ENCODE measurements at regions of chr9 and their contacts with region 1.

Region 1: GRCh38 chr9:113309204-113309813 is 6.1 kb upstream of the RNF183 start:
- DNase-seq: peak; percentile 17 to 44
- H3K4me3 ChIP-seq: no peak overlapping the region
- H3K27ac ChIP-seq: no peak overlapping the region
- H3K4me1 ChIP-seq: no peaks in the 10 kb centered on the region; the same call in 1 of the 2 replicates
- H3K27me3 ChIP-seq: no peaks in the 10 kb centered on the region
- CTCF ChIP-seq: peak; percentile 82

Region 2: GRCh38 chr9:113349445-113350094 is 40.3 kb after region 1 on chr9 and contains the start of gene BSPRY:
- CTCF ChIA-PET with region 1: no interaction called
- POLR2A ChIA-PET with region 1: no interaction called
- intact Hi-C with region 1: loop called (anchors 1 kb)
- DNase-seq: peak in 1 of 2 experiments; percentile 59
- H3K4me3 ChIP-seq: peak within 1 kb of the TSS; percentile 96
- H3K27ac ChIP-seq: no peak within 1 kb of the TSS
- H3K4me1 ChIP-seq: peaks cover 38% of the 10 kb centered on the region
- H3K27me3 ChIP-seq: no peaks in the 10 kb centered on the region
- CTCF ChIP-seq: no peak
- total RNA-seq, gene BSPRY: 28.8 and 29.3 TPM in 2 replicates

Region 3: DNA sequence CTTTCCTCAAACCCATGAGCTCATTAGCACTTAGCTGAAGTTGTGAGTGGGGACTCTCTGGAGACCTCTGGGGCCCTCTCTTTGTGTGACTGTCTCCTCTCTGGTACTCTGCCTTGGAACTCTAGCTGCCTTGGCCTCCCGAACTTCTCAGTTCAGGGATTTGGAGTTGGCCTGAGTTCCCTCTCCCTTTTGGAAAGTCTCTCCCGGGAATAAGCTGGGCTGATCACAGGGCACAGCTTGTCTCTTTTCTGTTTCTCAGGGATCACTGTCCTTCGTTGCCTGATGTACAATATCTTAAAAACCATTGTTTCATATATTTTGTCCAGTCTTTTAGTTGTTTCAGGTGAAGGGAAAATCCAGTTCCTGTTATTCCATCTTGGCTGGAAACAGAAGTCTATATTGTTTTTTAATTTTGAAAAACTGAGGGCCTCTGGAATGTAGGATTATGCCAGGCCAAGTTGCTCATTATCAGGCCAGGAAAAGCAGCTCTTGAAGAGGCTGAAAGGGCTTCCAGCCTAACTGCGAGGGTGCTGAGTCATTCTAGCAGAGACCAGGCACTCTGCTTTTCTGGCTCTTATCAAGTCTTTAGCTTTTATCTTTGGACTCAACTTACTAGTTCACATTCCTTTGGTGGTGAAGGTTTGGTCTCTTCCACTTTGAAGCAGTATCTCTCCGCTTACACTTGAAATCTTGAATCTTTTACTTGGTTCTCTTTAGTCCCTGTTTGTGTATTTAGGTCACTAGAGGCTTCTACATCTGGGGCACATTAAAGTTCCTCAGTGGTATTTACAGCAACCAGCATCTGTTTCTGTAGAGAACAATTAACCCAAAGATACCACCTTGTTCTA is 145.8 kb after region 1 on chr9:
- CTCF ChIA-PET with region 1: interaction called, 17 read pairs
- POLR2A ChIA-PET with region 1: no interaction called
- intact Hi-C with region 1: no loop called
- DNase-seq: peak; percentile 68 to 79
- H3K4me3 ChIP-seq: no peak overlapping the region
- H3K27ac ChIP-seq: peak overlapping the region; percentile 85
- H3K4me1 ChIP-seq: peaks cover 28% of the 10 kb centered on the region
- H3K27me3 ChIP-seq: no peaks in the 10 kb centered on the region
- CTCF ChIP-seq: no peak

Region 4: DNA sequence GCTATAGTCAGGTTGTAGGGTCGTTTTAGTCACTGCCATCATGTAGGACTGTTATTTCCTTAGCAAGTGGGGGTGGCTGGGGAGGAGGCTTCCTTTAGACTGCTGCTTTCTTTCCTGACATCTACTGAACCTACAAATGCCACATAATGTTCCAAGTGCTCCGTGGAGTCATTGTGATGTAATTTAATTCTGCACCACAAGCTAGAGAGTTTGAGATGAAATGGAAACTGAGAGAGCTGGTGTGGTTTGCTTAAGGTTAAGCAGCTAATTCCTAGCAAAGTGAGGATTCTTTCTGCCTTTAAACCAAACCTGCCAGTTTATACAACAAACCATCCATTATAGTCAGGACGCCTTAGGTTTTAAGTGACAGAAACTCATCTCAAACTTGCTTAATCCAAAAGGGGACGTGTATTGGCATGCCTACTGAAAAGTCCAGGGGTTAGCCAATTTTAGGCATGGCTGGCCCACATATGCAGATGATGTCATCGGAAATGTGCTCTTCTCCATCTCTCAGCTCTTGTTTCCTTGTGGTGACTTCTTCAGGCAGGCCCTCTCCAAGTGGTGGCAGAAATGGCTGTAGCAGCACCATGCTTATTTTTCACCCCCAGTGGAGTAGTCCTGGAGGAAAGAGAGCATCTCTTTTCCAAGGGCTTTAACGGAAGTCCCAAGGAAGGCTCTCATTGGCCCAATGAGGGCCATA is 597.3 kb after region 1 on chr9:
- CTCF ChIA-PET with region 1: no interaction called
- POLR2A ChIA-PET with region 1: no interaction called
- intact Hi-C with region 1: no loop called
- DNase-seq: no peak
- H3K4me3 ChIP-seq: no peak overlapping the region
- H3K27ac ChIP-seq: no peak overlapping the region
- H3K4me1 ChIP-seq: no peaks in the 10 kb centered on the region
- H3K27me3 ChIP-seq: peaks cover 94% of the 10 kb centered on the region
- CTCF ChIP-seq: no peak